Prostate gland (tissue), 2 donors: ENCODE measurements at regions of chr11 and their contacts with region 1.

Region 1: DNA sequence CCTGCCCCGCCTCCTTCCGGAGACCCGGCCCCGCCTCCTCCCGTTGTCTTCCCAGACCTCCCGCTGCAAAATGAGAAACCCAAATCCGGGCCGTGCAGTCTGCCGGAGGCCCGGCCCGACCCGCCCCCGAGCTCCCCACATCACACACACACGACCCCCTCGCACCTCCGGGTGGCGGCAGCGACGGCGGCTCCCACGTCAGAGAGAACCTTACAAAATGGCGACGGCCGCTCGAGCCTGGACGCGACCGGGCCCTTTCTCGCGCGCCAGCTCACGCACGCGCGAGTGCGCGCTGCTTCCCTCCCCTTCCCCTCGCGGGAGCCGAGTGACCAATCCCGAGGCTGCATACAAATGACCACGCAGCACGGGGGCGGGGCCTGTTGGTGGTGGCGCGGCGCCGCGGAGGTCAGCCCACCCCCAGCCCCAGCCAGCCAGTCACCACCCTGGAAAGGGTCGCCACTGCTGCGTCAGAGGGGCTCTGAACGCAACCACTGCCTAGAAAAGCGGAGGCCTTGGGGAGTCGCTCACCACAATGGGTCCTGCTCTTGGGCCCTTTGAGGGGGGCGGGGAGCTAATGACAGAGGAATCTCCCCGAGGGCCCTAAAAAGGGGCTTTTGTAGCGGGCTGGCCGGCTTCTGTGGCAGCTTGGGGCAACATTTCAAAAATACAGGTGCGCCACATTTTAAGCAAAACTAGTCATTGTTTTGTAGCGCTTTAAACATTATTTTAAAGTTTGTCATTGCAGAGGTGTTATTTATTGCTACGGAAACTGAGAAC is at the start of gene RBM4B:
- DNase-seq: peak; percentile 93
- H3K4me3 ChIP-seq: peak within 1 kb of the TSS; percentile 53 to 61
- H3K27ac ChIP-seq: peak within 1 kb of the TSS; percentile 92 to 94
- H3K4me1 ChIP-seq: peaks cover 8% of the 10 kb centered on the region
- H3K27me3 ChIP-seq: no peaks in the 10 kb centered on the region
- CTCF ChIP-seq: peak in 1 of 4 experiments; percentile 7
- POLR2A ChIP-seq: peak; percentile 90
- total RNA-seq, gene RBM4B: 15.5 to 40.7 TPM

Region 2: GRCh38 chr11:66480117-66480938 is 197.5 kb before region 1 on chr11 and contains the start of gene DPP3:
- intact Hi-C with region 1: loop called (anchors 5 kb)
- DNase-seq: peak; percentile 97
- H3K4me3 ChIP-seq: peak within 1 kb of the TSS; percentile 59 to 63
- H3K27ac ChIP-seq: peak within 1 kb of the TSS; percentile 85 to 90
- H3K4me1 ChIP-seq: no peaks in the 10 kb centered on the region
- H3K27me3 ChIP-seq: no peaks in the 10 kb centered on the region
- CTCF ChIP-seq: peak in 2 of 4 experiments; percentile 15 to 31
- POLR2A ChIP-seq: peak; percentile 91
- total RNA-seq, gene DPP3: 37.0 to 53.6 TPM

Region 3: DNA sequence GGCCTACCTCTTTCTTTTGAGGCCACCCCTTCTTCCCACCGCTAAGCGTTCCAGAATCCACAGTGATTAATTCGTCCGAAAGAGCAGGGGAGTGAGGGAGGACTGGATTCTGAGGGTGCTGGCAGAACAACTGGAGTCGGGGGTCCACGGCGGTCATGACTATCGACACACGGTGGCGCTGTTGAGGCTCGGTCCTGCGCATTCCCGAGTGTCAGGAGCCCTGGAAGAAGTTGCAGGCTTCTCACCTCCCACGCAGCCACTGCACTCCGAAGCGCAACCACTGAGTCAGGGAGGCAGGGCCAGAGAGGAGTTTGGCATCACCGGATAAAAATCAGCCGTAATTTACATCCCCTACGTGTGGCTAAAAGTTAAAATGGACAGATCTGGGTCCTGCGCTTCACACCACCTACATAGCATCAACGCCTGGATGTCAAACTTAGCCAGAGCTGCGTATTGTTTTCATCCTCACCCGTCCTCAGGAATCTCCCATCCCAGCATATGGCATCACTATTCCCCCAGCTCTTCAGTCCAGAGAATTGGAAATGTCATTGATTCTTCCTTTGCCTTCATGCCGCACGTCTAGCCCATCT is 98.7 kb before region 1 on chr11:
- intact Hi-C with region 1: loop called (anchors 1 kb)
- DNase-seq: peak; percentile 61
- H3K4me3 ChIP-seq: no peak overlapping the region
- H3K27ac ChIP-seq: no peak overlapping the region
- H3K4me1 ChIP-seq: no peaks in the 10 kb centered on the region
- H3K27me3 ChIP-seq: no peaks in the 10 kb centered on the region
- CTCF ChIP-seq: peak; percentile 62 to 94 (median 83)
- POLR2A ChIP-seq: no peak

Region 4: GRCh38 chr11:66592457-66593302 is 85.1 kb before region 1 on chr11 and contains the starts of genes CCDC87 and CCS:
- intact Hi-C with region 1: loop called (anchors 5 kb)
- DNase-seq: peak; percentile 97
- H3K4me3 ChIP-seq: peak within 1 kb of the TSS; percentile 60 to 66
- H3K27ac ChIP-seq: peak within 1 kb of the TSS; percentile 80 to 83
- H3K4me1 ChIP-seq: peaks cover 8% of the 10 kb centered on the region
- H3K27me3 ChIP-seq: no peaks in the 10 kb centered on the region
- CTCF ChIP-seq: peak; percentile 57 to 88 (median 72)
- POLR2A ChIP-seq: peak; percentile 93
- total RNA-seq, gene CCDC87: 0.82 to 3.8 TPM
- total RNA-seq, gene CCS: 31.0 to 63.8 TPM

Region 5: DNA sequence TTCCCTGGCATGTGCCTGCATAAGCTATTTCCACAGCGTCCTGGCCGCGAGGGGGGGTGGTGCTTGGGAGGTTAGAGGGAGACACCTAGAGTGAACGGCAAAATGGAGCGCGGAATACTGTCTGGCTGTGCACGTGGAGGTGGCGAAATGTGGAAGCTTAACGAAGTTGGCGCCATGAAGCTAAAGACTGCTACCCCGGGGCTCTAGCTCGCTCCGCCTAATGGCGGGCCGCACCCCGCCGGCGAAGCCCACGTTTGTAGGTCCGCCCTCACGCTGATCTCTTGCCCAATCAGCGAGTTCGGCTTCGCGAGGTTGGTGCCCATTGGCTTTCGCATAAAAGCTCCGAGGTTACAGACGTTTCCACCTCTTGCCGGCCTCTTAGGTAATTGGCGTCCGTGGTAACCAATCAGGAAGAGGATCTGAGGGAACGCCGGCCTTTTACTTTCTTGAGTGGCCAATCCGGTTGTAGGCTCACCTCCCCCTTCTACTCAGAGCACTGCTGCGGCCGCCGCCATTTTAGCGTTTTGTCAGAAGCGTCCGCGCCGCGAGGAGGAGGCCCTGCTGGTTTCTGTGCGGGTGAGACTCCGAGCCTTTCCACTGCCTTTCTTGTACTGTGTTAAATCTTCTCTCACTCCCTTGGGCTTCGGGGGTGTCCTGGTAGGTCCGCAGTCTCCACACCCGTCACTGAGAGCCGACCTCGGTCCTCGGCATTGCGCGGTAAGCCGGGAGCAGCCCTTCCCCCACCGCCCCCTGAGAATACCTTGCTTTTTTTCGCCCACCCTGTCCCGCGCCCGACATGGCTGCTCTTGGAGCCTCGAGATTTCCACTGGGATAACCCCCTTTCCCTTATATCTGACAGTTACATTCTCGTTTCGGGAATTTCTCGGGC is 39.4 kb before region 1 on chr11 and contains the start of gene RBM4:
- intact Hi-C with region 1: loop called (anchors 5 kb)
- DNase-seq: peak; percentile 100
- H3K4me3 ChIP-seq: peak within 1 kb of the TSS; percentile 65 to 82
- H3K27ac ChIP-seq: peak within 1 kb of the TSS; percentile 90 to 94
- H3K4me1 ChIP-seq: peaks cover 6% of the 10 kb centered on the region
- H3K27me3 ChIP-seq: no peaks in the 10 kb centered on the region
- CTCF ChIP-seq: peak in 3 of 4 experiments; percentile 12 to 31 (median 28)
- POLR2A ChIP-seq: peak; percentile 97
- total RNA-seq, gene RBM4: 105 to 137 TPM